HEK293 (cell line): ENCODE measurements at regions of chr20 and their contacts with region 1.

Region 1: GRCh38 chr20:23415959-23416583 is 5.2 kb downstream of the NAPB start:
- H3K4me3 ChIP-seq: no peak overlapping the region
- H3K27ac ChIP-seq: 0 out of 2 replicates have a peak overlapping the region, but pooled peaks have one; percentile 37
- H3K4me1 ChIP-seq: peaks cover 15% of the 10 kb centered on the region
- CTCF ChIP-seq: no peak

Region 2: GRCh38 chr20:23441850-23442313 is 25.8 kb after region 1 on chr20:
- CTCF ChIA-PET with region 1: interaction called, 23 read pairs
- POLR2A ChIA-PET with region 1: interaction called, 3 read pairs
- H3K4me3 ChIP-seq: no peak overlapping the region
- H3K27ac ChIP-seq: no peak overlapping the region
- H3K4me1 ChIP-seq: no peaks in the 10 kb centered on the region
- CTCF ChIP-seq: peak; percentile 71

Region 3: DNA sequence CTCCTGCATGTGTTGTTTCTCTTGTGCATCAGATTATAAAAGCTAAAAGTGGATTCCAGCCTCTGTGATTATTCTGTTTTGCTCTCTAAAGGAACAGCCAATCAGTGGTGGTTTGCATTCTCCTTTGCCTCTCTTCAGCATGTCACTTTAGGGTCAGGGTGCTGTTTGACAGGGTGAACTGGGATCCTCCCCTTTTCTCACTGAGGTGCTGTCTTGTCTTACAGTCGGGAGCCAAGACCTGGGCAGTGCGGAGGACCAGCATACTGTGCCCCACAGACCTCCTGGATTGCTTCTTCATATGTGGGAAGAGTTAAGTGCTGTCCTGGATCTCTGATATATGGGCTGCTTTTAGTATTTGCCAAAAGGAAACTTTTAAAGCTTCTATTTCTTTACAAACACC is 425.6 kb after region 1 on chr20:
- CTCF ChIA-PET with region 1: no interaction called
- POLR2A ChIA-PET with region 1: no interaction called
- H3K4me3 ChIP-seq: no peak overlapping the region
- H3K27ac ChIP-seq: no peak overlapping the region
- H3K4me1 ChIP-seq: no peaks in the 10 kb centered on the region
- CTCF ChIP-seq: no peak